WTC11 (cell line): ENCODE measurements at regions of chr11 and their contacts with region 1.

Region 1: DNA sequence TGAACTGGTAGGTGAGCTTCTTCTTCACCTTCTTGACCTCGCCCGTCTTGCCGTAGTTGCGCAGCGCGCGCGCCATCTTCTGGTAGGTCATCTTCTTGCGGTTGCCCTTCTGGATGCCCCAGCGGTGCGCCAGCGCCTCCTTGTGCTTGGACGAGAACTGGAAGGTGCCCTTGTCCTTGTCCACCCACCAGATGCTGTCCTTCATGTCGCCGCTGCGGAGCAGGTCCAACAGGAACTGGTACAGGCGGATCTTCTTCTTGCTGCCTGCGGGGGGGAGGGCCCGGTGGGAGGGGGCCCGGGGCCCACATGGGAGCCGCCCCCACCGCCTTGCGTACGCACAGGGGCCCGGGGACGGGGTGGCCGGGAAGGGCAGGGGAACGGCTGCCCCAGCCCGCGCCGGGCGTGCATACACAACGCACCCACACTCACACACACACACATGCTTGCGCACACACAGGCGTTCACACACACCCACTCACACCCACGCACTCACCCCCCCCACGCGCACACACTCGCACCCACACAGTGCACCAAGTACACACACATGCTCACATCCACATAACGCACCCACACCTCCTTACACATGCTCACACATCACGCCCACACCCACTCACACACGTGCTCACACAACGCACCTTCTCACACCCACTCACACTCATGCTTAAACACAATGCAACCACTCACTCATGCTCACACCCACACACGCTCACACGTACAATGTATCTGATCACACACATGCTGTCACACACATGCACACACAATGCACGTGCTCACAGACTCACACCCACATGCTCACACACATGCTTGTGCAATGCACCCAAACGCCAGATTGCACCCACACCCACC is 3.0 kb upstream of the MYBPC3 start:
- DNase-seq: peak; percentile 99
- ATAC-seq: peak; percentile 89
- H3K4me3 Mint-ChIP-seq: peak overlapping the region; percentile 66
- H3K27ac Mint-ChIP-seq: no peak overlapping the region
- H3K4me1 Mint-ChIP-seq: peaks cover 13% of the 10 kb centered on the region
- H3K27me3 Mint-ChIP-seq: no peaks in the 10 kb centered on the region
- CTCF ChIP-seq: peak; percentile 77

Region 2: GRCh38 chr11:47186076-47186936 is 169.2 kb before region 1 on chr11 and contains the start of gene PACSIN3:
- CTCF ChIA-PET with region 1: interaction called, 21 read pairs
- POLR2A ChIA-PET with region 1: no interaction called
- DNase-seq: peak; percentile 69
- ATAC-seq: peak; percentile 8
- H3K4me3 Mint-ChIP-seq: peak within 1 kb of the TSS; percentile 81
- H3K27ac Mint-ChIP-seq: peak within 1 kb of the TSS; percentile 86
- H3K4me1 Mint-ChIP-seq: peaks cover 19% of the 10 kb centered on the region
- H3K27me3 Mint-ChIP-seq: peaks cover 9% of the 10 kb centered on the region
- CTCF ChIP-seq: no peak
- total RNA-seq, gene PACSIN3: 74.5 to 77.1 TPM (median 76.8 TPM) in 3 replicates

Region 3: GRCh38 chr11:47248664-47249377 is 106.7 kb before region 1 on chr11 and contains the start of gene ACP2:
- CTCF ChIA-PET with region 1: interaction called, 20 read pairs
- POLR2A ChIA-PET with region 1: no interaction called
- DNase-seq: peak; percentile 91
- ATAC-seq: peak; percentile 93
- H3K4me3 Mint-ChIP-seq: peak within 1 kb of the TSS; percentile 98
- H3K27ac Mint-ChIP-seq: peak within 1 kb of the TSS; percentile 100
- H3K4me1 Mint-ChIP-seq: peaks cover 9% of the 10 kb centered on the region
- H3K27me3 Mint-ChIP-seq: no peaks in the 10 kb centered on the region
- CTCF ChIP-seq: no peak
- total RNA-seq, gene ACP2: 18.7 to 19.6 TPM (median 19.2 TPM) in 3 replicates

Region 4: DNA sequence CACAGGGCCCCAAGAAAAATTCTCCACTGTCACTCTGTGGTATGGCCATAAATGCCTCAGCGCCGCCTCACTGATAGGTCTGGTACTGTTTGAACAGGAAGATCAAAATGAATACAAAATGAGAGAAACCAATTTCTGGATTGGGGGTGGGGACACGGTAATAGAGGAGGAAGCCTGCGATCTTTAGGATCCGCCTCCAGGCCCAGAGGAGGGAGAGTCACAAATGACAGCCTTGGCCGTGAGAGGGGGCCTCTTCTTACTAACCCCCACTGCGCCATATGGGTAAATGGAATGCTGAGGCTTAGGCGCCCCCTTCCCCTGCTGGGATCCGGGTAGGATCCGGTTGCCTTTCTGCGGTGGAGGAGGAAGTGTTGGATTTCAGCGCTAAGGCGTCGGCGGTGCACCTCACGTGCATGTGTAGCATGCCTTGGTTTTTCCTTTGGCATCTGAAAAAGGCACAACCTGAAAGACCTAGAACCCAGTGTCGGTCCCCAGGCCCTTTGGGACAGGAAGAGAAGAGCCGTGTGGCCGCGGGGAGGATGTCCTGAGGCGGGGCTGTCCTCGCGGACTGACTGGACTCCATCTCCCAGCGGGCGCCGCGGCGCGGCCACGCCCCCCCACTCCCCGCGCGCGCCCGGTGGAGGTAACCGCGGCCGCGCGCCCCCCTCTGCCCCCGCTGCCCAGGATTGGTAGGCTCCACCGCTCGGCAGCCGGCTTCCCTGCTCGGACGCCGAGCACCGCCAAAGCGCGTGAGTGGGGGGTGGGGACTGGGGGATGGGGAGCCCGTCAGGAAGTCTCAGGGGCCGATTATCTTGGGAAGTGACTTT is 86.3 kb before region 1 on chr11:
- CTCF ChIA-PET with region 1: interaction called, 17 read pairs
- POLR2A ChIA-PET with region 1: no interaction called
- DNase-seq: peak; percentile 91
- ATAC-seq: peak; percentile 72
- H3K4me3 Mint-ChIP-seq: peak overlapping the region; percentile 92
- H3K27ac Mint-ChIP-seq: peak overlapping the region; percentile 94
- H3K4me1 Mint-ChIP-seq: peaks cover 39% of the 10 kb centered on the region
- H3K27me3 Mint-ChIP-seq: no peaks in the 10 kb centered on the region
- CTCF ChIP-seq: no peak

Region 5: GRCh38 chr11:47332791-47333525 is 22.5 kb before region 1 on chr11:
- CTCF ChIA-PET with region 1: interaction called, 15 read pairs
- POLR2A ChIA-PET with region 1: interaction called, 3 read pairs
- DNase-seq: no peak
- ATAC-seq: no peak
- H3K4me3 Mint-ChIP-seq: no peak overlapping the region
- H3K27ac Mint-ChIP-seq: no peak overlapping the region
- H3K4me1 Mint-ChIP-seq: no peaks in the 10 kb centered on the region
- H3K27me3 Mint-ChIP-seq: no peaks in the 10 kb centered on the region
- CTCF ChIP-seq: no peak

Region 6: DNA sequence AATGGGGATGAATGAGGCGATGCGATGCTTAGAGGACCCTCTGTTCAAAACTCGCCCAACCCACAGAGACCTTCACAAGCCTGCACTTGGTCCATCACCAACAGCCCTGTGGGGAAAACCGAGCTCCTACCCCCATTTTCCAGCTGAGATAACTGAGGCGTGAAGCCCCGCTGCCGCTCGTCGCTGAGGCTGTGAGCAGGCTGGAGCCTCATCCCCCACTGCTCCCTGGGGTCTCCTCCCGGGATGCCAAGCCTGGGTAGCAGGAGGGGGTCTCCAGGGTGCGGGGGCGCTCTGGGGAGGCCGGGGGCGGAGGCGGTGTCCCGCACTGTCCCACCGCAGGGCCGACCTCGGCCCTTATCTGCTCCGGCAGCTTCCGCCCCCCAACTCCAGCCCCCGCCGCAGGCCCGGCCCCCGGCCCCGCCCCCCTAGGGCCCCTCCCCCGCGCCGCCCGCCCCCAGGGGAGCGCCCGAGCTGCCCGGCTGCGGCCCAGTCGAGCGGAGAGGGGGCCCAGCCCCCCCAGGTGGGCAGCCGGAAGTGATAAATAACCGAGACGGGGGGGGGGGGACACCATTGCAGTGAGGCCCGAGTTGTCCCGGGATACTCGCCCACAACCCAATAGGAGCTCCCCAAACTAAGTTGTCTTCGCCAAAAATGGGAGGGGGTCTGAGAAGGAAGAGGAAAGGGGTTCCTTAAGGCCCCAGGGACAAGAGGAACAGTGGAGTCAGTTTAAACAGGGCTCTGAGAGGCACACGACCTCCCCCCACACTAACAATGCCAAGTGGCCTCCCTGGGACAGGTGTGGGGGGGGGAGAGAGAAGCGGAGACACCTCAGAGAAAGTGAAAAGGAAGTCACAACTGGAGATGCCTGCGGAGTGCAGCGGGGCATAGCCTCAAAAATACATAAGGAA is 44.6 kb after region 1 on chr11:
- CTCF ChIA-PET with region 1: interaction called, 17 read pairs
- POLR2A ChIA-PET with region 1: no interaction called
- DNase-seq: peak; percentile 46
- ATAC-seq: peak; percentile 69
- H3K4me3 Mint-ChIP-seq: peak overlapping the region; percentile 79
- H3K27ac Mint-ChIP-seq: peak overlapping the region; percentile 97
- H3K4me1 Mint-ChIP-seq: peaks cover 31% of the 10 kb centered on the region
- H3K27me3 Mint-ChIP-seq: no peaks in the 10 kb centered on the region
- CTCF ChIP-seq: no peak

Region 7: DNA sequence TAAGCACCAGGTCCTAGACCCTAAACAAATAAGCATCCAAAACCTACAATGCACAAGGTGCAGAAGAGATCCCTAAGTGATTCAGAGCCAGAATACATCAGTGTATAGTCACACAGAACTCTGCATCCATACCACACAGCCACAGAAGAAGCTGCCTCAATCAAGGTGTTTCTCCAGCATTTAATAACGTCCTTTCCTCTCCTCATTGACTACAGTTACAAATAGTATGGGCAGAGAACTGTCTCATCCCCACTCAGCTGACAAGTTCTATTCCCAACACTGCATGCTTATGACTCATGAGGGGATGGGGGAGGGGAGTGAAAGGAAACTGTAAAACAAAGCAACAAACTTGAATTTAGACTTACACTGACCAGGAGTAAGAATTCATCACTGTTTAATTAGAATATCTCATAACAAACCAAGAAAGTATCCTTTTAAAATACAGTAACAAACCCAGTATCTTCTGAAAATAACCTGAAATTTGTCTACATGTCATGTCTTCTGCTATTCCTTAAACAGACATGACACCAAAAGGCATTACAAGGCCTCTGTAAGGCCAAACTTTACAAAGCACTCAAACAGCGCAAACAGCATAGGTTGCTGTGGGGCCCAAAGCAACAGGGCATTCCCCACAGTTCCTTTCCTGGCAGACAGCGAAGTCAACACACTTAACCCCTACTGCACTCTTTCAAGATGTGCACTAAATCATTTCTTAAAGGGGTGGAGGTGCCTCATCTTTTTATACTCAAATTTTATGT is 168.1 kb after region 1 on chr11:
- CTCF ChIA-PET with region 1: no interaction called
- POLR2A ChIA-PET with region 1: no interaction called
- DNase-seq: no peak
- ATAC-seq: no peak
- H3K4me3 Mint-ChIP-seq: no peak overlapping the region
- H3K27ac Mint-ChIP-seq: peak overlapping the region; percentile 78
- H3K4me1 Mint-ChIP-seq: peaks cover 51% of the 10 kb centered on the region
- H3K27me3 Mint-ChIP-seq: no peaks in the 10 kb centered on the region
- CTCF ChIP-seq: no peak